AG04449 (cell line): ENCODE measurements at regions of chr12 and their contacts with region 1.

Region 1: GRCh38 chr12:82685790-82686167 is 927 bp upstream of the TMTC2 start:
- DNase-seq: peak; percentile 41
- H3K4me3 ChIP-seq: peak overlapping the region; percentile 95
- CTCF ChIP-seq: peak; percentile 93

Region 2: DNA sequence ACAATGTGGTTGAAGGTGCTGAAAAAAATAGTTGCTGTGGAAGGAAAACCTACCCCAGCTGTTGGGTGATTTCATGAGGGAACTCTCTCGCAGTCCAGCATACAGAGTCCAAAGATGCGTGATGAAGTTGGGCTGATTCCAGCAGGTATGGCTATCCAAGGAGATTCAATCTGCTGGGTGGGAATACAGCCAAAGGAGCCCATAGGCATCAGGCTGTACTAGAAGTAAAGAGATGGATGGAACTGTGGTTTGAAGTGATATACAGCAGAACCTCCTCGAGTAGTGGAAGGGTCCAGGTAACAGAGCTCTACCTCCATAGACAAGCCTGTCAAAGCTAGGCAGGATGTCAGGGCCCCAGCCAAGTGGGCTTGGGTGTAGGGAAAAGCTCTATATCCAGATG is 10.5 kb before region 1 on chr12:
- CTCF ChIA-PET with region 1: interaction called, 21 read pairs
- POLR2A ChIA-PET with region 1: no interaction called
- DNase-seq: no peak
- H3K4me3 ChIP-seq: no peak overlapping the region
- CTCF ChIP-seq: no peak

Region 3: DNA sequence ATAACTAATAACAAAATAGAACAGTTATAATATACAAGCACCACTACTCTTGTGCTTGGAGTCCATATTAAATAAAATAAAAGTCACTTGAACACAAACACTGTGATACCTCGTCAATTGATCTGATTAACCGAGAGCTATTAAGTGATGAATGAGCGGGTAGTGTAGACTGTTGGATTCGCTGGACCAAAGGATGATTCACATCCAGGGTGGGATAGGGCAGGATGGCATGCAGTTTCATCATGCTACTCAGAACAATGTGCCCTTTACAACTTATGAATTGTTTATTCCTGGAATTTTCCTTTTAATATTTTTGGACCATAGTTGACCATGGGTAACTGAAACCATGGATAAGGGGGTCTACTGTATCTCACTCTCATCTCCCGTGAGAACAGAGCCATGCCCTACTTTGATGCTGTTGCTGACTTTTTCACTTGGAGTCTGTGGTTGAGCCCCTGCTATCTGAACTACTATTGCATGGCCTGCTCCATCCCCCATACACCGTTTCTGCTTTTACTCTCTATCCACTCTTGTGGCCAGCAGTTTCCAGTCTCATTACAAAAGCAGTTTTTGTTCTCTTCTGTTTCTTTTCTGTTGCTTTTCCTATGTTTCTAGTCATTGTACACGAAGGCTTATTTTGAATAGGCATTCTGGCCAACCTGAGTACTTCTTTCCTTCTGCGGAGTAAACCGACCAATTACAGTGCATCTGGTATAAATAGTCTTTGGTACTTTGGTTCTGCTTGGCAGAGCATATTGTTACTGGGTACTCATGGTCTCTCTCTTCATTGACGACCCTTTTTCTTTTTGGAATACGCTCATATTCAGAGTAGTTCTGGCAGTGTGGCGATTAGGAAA is 13.2 kb after region 1 on chr12:
- CTCF ChIA-PET with region 1: interaction called, 23 read pairs
- POLR2A ChIA-PET with region 1: no interaction called
- DNase-seq: no peak
- H3K4me3 ChIP-seq: no peak overlapping the region
- CTCF ChIP-seq: no peak

Region 4: DNA sequence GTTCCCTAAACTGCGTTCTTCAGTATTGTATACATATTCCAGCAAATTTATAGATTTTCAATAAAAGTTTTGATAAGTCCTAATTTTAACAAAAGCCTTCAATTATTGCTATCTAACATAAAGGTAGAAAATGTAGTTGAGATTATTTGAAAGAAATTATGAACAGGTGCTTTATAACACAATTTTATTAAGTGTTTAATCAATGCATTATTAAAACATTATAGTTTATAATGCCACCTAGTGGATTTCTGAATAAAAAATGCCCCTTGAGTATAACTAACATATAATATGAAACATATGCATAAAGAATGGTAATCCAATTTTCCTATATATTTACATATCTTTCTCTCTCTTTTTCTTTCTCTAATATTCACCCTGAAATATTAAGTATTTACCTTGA is 1711.5 kb after region 1 on chr12:
- CTCF ChIA-PET with region 1: interaction called, 10 read pairs
- POLR2A ChIA-PET with region 1: no interaction called
- DNase-seq: no peak
- H3K4me3 ChIP-seq: no peak overlapping the region
- CTCF ChIP-seq: no peak

Region 5: GRCh38 chr12:84497819-84498218 is 1812.0 kb after region 1 on chr12:
- CTCF ChIA-PET with region 1: interaction called, 39 read pairs
- POLR2A ChIA-PET with region 1: no interaction called
- DNase-seq: no peak
- H3K4me3 ChIP-seq: no peak overlapping the region
- CTCF ChIP-seq: peak; percentile 33

Region 6: DNA sequence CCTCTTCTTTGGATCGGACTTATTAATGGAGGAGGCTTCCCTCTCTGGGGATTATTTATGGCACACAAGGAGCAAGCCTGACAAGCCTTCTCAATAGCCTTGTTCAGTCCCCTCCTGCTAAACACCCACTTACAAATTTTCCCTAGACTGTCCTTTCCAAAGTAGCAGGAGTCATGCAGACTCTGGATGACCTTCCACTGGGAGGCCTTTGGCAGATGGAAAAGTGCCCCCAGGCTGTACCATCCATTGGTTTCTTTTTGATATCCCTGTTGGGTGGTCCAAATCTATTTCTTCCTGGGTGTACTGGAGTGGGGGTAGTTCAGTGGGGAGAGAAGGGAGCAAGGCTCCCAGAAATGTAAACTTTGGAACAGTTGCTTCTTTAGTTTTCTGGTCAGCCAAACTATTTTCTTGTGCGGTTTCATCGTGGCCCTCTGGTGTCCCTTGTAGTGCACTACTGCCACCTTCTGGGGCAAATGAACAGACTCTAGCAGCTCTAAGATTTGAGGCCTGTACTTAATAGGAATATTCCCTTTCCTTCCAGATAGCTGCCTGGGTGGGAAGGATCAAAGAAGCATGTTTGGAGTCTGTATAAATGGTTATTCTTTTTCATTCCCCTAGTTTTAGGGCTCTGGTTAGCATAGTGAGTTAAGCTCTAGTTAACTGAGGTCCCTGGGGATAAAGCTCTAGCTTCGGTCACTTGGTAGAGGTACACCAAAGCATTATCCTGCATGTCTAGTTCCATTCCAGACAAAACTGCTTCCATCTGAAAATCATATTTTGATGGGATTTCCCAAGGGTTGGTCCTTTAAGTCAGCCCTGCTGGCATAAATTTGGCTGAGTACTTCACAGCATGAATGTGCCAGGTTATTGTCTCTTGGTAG is 1817.4 kb after region 1 on chr12:
- CTCF ChIA-PET with region 1: interaction called, 39 read pairs
- POLR2A ChIA-PET with region 1: no interaction called
- DNase-seq: peak; percentile 26
- H3K4me3 ChIP-seq: no peak overlapping the region
- CTCF ChIP-seq: peak; percentile 56